K562 (cell line): ENCODE measurements at regions of chr11 and their contacts with region 1.

Region 1: DNA sequence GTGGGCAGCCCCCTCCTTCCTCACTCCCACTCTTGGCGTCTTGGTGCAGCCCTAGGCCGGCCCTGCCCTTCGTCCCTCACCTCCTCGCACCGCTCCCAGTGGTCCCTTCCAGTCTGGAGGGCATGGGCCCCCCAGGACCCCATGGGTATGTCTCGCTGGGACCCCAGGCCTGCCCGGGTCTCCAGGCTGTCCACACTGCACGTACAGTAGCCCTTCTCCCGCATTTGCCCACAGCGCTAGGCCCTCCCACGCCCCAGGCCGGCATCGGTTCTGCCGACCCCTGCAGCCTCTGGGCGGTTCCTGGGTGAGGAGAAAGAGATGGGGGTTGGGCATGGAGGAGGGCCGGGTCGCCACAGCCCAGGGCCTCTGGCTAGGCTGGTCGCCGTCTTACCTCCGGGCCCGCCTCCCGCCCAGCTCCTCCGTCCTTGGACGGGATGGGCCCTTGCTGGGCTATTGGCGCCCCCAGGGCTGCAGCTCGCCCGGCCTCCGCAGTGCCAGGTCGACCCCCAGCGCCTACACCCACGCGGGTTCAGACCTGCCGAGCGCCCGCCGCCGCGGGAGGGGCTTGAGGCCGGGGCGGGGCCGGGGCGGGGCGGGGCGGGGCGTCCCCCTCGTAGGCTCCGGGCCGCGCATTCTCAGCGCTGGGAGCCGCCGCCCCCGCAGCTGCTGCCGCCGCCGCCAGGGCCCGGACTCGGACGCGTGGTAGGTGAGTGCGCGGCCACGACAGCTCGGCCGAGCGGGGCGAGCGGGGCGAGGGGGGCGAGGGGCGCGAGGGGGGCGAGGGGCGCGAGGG is at the start of gene CD151:
- DNase-seq: peak; percentile 73 to 84 (median 78)
- ATAC-seq: peak; percentile 76
- H3K4me3 ChIP-seq: peak within 1 kb of the TSS; percentile 87
- H3K27ac ChIP-seq: peak within 1 kb of the TSS; percentile 94
- H3K4me1 ChIP-seq: peaks cover 24 to 91% of the 10 kb centered on the region in 2 experiments
- H3K27me3 ChIP-seq: no peaks in the 10 kb centered on the region
- CTCF ChIP-seq: no peak
- EP300 ChIP-seq: no peak
- POLR2A ChIP-seq: peak; percentile 57
- RAD21 ChIP-seq: no peak
- polyA plus RNA-seq, gene CD151: 2.3 to 6.5 TPM

Region 2: GRCh38 chr11:803770-804598 is 28.5 kb before region 1 on chr11:
- CTCF ChIA-PET with region 1: no interaction called
- POLR2A ChIA-PET with region 1: interaction called, 5 read pairs
- in situ Hi-C with region 1: no loop called
- intact Hi-C with region 1: loop called (anchors 2 kb)
- DNase-seq: no peak
- ATAC-seq: no peak
- H3K4me3 ChIP-seq: peak overlapping the region; percentile 65
- H3K27ac ChIP-seq: no peak overlapping the region; the same call in 2 of the 3 replicates
- H3K4me1 ChIP-seq: peaks cover 10 to 87% of the 10 kb centered on the region in 2 experiments; a peak in 4 of 5 replicates
- H3K27me3 ChIP-seq: no peaks in the 10 kb centered on the region
- CTCF ChIP-seq: no peak
- EP300 ChIP-seq: no peak
- POLR2A ChIP-seq: no peak
- RAD21 ChIP-seq: no peak

Region 3: GRCh38 chr11:819129-819931 is 13.2 kb before region 1 on chr11:
- CTCF ChIA-PET with region 1: no interaction called
- POLR2A ChIA-PET with region 1: interaction called, 20 read pairs
- in situ Hi-C with region 1: no loop called
- intact Hi-C with region 1: no loop called
- DNase-seq: peak; percentile 85 to 95 (median 90)
- ATAC-seq: peak; percentile 88
- H3K4me3 ChIP-seq: peak overlapping the region; percentile 89
- H3K27ac ChIP-seq: peak overlapping the region; percentile 92
- H3K4me1 ChIP-seq: peaks cover 11 to 67% of the 10 kb centered on the region in 2 experiments; a peak in 4 of 5 replicates
- H3K27me3 ChIP-seq: no peaks in the 10 kb centered on the region
- CTCF ChIP-seq: no peak
- EP300 ChIP-seq: no peak
- POLR2A ChIP-seq: peak; percentile 84
- RAD21 ChIP-seq: no peak